Endothelial cell of umbilical vein (primary cell): ENCODE measurements at regions of chr17 and their contacts with region 1.

Region 1: DNA sequence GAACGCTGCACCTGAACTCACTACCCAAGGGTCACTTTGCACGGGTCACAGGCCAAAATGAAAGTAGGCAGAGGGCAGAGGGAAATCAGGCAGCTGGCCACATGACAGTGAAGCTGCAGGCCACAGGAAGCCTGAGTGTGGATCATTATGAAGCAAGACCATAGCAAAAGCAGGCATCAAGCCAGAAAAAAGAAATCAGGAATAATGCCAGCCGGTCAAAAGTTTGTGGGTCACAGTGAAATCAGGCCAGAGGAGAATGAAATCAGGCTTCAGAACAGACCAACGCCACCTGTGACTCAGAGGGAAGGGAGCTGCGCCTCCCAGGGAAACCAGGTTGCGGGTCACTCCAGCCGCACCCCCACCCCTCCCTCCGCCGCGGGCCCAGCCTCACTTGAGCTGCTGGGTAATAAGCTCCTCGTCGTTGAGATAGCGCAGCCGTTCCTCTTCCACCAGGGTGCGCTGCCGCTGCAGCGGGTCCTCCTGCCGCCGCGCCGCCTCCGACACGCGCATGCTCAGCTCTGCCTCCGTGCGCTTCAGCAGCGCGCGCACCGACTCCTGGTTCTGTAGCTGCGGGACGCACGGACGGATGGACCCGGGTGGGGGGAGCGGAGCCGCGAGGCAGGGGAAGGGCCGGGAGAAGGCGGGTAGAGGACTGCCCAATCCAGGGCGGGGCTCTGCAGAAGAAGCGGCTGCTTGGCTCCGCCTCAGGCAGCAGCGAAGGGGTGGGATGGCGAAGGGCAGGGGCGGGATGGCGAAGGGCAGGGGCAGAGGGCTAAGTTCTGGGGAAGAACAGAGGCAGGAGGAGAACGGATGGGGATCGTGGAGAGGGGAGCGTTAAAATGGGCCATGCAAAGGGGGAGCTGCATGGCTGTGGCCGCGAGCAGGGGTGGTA is 47.7 kb downstream of the SRCIN1 start:
- DNase-seq: peak; percentile 89
- H3K4me3 ChIP-seq: peak overlapping the region in 1 of 3 experiments; percentile 18
- H3K27ac ChIP-seq: no peak overlapping the region
- H3K4me1 ChIP-seq: peaks cover 13% of the 10 kb centered on the region
- H3K27me3 ChIP-seq: peaks cover 45 to 58% of the 10 kb centered on the region in 2 experiments
- CTCF ChIP-seq: peak; percentile 94 to 98
- POLR2A ChIP-seq: no peak

Region 2: DNA sequence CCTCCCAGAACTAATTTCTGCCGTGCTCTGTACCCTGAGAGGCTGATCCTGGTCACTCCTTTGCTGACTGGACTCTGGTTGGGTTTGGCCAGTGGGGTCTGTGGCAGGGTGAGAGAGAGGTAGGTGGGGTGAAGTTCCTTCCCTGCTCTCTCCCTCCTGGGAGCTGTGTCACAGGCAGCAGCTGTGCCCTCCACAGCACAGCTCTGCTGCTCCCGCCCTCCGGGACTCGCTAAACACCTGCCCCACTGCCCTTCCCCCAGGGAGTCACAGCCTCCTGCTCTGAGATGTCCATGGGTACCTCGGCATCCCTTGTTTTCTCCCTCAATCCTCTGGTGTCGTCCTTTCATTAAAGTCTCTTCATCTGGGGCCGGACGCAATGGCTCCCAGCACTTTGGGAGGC is 18.7 kb before region 1 on chr17:
- CTCF ChIA-PET with region 1: interaction called, 40 read pairs
- POLR2A ChIA-PET with region 1: no interaction called
- dilution Hi-C with region 1: no loop called
- intact Hi-C with region 1: no loop called
- DNase-seq: no peak
- H3K4me3 ChIP-seq: no peak overlapping the region
- H3K27ac ChIP-seq: no peak overlapping the region
- H3K4me1 ChIP-seq: no peaks in the 10 kb centered on the region
- H3K27me3 ChIP-seq: no peaks in the 10 kb centered on the region
- CTCF ChIP-seq: no peak
- POLR2A ChIP-seq: no peak

Region 3: GRCh38 chr17:38577244-38577643 is 19.2 kb after region 1 on chr17:
- CTCF ChIA-PET with region 1: interaction called, 37 read pairs
- POLR2A ChIA-PET with region 1: no interaction called
- dilution Hi-C with region 1: no loop called
- intact Hi-C with region 1: no loop called
- DNase-seq: no peak
- H3K4me3 ChIP-seq: no peak overlapping the region
- H3K27ac ChIP-seq: no peak overlapping the region
- H3K4me1 ChIP-seq: no peaks in the 10 kb centered on the region
- H3K27me3 ChIP-seq: peaks cover 59 to 61% of the 10 kb centered on the region in 2 experiments
- CTCF ChIP-seq: no peak
- POLR2A ChIP-seq: no peak

Region 4: DNA sequence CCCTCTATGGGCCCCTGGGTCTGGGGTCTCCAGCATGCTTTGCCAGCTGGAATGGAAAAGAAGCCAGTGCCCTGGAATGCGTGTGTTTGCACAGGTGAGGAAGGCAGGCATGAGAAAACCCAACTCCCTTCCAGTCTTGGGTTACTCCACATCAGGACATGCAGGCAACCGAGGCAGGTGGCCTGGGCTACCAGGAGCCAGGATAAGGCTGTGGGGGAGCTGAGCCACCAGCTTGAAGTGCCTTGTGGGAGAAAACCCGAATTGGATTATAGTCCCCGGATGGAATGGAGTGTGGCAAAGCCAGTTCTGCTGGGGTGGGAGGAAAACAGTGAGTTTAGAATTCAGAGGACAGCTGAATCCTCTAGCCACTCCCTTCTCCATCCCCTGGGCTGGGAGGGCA is 40.5 kb after region 1 on chr17:
- CTCF ChIA-PET with region 1: interaction called, 31 read pairs
- POLR2A ChIA-PET with region 1: no interaction called
- dilution Hi-C with region 1: no loop called
- intact Hi-C with region 1: no loop called
- DNase-seq: peak; percentile 11
- H3K4me3 ChIP-seq: no peak overlapping the region
- H3K27ac ChIP-seq: no peak overlapping the region
- H3K4me1 ChIP-seq: no peaks in the 10 kb centered on the region
- H3K27me3 ChIP-seq: peaks cover 5 to 19% of the 10 kb centered on the region in 2 experiments
- CTCF ChIP-seq: no peak
- POLR2A ChIP-seq: no peak

Region 5: GRCh38 chr17:38660097-38661025 is 102.3 kb after region 1 on chr17:
- CTCF ChIA-PET with region 1: interaction called, 321 read pairs
- POLR2A ChIA-PET with region 1: no interaction called
- dilution Hi-C with region 1: no loop called
- intact Hi-C with region 1: no loop called
- DNase-seq: no peak
- H3K4me3 ChIP-seq: no peak overlapping the region
- H3K27ac ChIP-seq: no peak overlapping the region
- H3K4me1 ChIP-seq: no peaks in the 10 kb centered on the region
- H3K27me3 ChIP-seq: peaks cover 0 to 2% of the 10 kb centered on the region in 2 experiments
- CTCF ChIP-seq: no peak
- POLR2A ChIP-seq: no peak

Region 6: DNA sequence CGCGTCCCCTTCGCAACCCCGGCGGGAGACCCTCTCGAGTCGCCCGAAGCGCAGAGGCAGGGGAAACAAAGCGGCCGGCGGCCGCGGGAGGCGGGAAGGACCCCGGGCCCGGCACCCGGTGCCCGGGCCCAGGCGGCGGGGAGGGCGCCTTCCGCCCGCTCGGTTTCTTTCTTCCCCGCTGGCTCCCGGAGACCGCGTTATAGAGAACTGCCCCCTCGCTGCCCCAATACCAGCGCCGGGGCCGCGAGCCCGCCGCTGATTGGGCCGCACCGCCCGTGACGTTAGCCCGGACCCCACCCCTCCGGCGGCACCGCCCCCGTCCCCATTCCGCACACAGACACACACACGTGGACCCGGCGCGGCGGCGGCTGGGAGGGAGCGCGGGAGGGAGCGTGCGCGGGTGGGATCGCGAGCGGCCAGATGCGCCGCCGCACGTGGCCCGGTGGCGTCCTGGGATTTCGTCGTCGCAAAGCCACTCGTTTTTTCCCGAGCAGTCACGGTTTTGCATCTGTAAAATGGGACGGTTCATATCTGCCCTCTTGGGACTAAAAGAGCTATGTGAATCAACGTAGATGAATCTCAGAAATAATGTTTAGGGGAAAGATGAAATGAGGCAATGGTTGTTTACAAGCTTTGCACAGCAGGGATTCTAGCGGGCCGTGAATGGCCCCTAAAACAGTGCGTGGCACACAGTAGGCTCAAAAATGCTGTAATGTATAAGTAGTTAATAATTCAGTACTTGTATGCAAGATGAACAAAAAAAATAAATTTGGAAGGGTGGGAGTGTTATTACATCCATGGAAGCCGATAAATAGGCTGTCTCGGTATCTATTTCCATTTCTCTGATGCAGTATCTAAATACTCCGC is 116.9 kb after region 1 on chr17 and contains the start of gene EPOP:
- CTCF ChIA-PET with region 1: interaction called, 321 read pairs
- POLR2A ChIA-PET with region 1: no interaction called
- dilution Hi-C with region 1: no loop called
- intact Hi-C with region 1: no loop called
- DNase-seq: peak; percentile 85
- H3K4me3 ChIP-seq: peak within 1 kb of the TSS; percentile 32 to 63 (median 41)
- H3K27ac ChIP-seq: no peak within 1 kb of the TSS
- H3K4me1 ChIP-seq: peaks cover 14% of the 10 kb centered on the region
- H3K27me3 ChIP-seq: peaks cover 28 to 39% of the 10 kb centered on the region in 2 experiments
- CTCF ChIP-seq: no peak
- POLR2A ChIP-seq: no peak
- total RNA-seq, gene EPOP: 2.6 and 2.9 TPM in 2 replicates